Posterior cingulate gyrus (tissue), 11 donors: ENCODE measurements at regions of chr1 and their contacts with region 1.

Region 1: DNA sequence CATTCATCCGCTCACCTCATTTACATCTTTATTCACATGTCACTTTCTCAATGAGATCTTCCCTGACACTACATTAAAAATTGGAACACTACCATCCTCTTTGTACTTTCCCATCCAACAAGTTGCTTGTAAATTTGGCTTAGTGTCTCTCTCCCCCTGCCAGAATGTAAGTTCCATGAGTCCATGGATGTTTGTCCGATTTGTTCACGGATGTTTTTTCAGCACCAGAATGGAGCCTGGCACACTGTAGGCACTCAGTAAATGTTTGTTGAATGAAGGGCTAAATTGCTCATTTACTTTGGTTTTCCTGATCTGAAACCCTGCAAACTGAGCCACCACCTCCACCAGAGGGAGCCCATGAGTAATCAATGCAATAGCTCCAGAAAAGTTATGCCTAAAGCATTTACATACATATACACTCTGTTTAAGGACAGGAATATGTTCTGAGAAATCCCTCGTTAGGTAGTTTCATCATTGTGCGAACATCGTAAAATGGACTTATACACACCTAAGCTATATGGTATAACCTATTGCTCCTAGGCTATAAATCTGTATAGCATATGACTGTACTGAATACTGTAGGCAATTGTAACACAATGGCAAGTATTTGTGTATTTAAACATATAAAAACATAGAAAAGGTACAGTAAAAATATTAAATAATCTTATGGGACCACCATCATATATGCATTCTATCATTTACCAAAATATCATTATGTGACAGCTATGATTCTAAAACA is 2.8 kb upstream of the EYA3 start:
- DNase-seq: peak in 9 of 10 donors; percentile 24 to 94 (median 69)

Region 2: DNA sequence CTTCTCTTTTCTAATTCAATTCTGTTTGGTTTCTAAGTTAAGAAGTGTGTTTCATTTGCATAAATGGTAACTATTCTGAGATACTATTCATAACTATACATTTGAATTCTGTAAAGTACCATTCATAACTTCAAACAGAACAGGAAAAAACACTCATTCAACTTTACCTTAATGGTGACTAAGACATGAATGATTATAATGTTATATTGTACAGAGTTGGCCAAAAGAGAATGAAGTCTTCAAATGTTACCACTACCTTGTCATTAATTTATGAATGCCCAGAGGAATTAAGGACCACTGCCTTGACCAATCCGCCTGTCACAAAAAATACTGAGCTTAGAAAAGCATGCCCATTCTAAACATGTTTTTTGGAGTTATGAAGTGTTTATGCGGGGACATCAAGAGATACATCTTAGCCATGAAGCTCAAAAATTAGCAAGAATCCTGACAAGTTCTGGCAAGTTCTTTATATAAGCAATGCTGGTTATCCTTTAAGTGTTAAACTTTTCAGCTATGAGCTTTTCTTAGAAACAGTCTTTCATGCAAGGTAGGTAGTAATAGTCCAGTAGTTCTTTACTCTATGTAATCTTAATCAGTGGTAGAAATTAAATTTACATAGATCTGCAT is 609.1 kb before region 1 on chr1:
- intact Hi-C with region 1: no loop called
- DNase-seq: no peak

Region 3: DNA sequence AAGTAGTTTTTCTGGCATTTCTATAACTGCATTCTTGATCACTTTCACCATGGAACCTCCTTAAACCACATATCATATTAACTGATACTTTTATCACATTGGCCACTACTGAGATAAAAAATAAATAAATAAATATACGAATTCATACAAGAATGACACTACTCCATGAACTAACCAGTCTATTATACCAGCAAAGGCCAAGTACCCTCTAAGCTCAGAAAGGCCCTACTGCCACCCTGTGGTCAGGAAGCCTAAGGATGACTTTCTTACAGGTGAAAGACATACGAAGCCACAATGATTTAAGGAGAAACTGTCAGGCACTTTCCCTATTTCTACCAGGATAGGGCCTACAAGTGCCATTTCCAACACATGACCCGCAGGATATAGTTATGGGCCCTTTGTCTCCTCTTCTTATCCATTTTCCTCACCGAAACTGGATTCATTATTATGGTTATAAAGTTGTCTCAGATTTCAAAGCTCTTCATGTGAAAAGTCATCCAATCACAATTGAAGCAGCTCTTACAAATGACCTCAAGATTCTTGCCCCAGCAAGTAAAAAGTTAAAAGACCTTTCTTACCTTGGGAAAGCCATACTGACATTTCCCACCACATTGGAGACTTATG is 117.7 kb after region 1 on chr1:
- intact Hi-C with region 1: loop called (anchors 1 kb)
- DNase-seq: peak in 6 of 10 donors; percentile 58 to 94 (median 69)